Endothelial cell of umbilical vein (primary cell): ENCODE measurements at regions of chr6 and their contacts with region 1.

Region 1: GRCh38 chr6:98909236-98909635 is 38.5 kb downstream of the FBXL4 start:
- DNase-seq: no peak
- H3K4me3 ChIP-seq: no peak overlapping the region
- H3K27ac ChIP-seq: no peak overlapping the region
- H3K4me1 ChIP-seq: no peaks in the 10 kb centered on the region
- H3K27me3 ChIP-seq: no peaks in the 10 kb centered on the region
- CTCF ChIP-seq: no peak
- POLR2A ChIP-seq: no peak

Region 2: GRCh38 chr6:98894810-98895209 is 14.4 kb before region 1 on chr6:
- CTCF ChIA-PET with region 1: no interaction called
- POLR2A ChIA-PET with region 1: no interaction called
- dilution Hi-C with region 1: no loop called
- intact Hi-C with region 1: loop called (anchors 2 kb)
- DNase-seq: no peak
- H3K4me3 ChIP-seq: no peak overlapping the region
- H3K27ac ChIP-seq: no peak overlapping the region
- H3K4me1 ChIP-seq: no peaks in the 10 kb centered on the region
- H3K27me3 ChIP-seq: no peaks in the 10 kb centered on the region
- CTCF ChIP-seq: no peak
- POLR2A ChIP-seq: no peak